Mammary epithelial cell (primary cell): ENCODE measurements at regions of chr7 and their contacts with region 1.

Region 1: GRCh38 chr7:151795168-151795811 is 81.6 kb downstream of the PRKAG2 start:
- DNase-seq: no peak
- H3K4me3 ChIP-seq: no peak overlapping the region
- H3K27ac ChIP-seq: no peak overlapping the region
- H3K4me1 ChIP-seq: peaks cover 14% of the 10 kb centered on the region
- H3K27me3 ChIP-seq: no peaks in the 10 kb centered on the region
- CTCF ChIP-seq: no peak

Region 2: GRCh38 chr7:151736403-151736909 is 58.8 kb before region 1 on chr7:
- CTCF ChIA-PET with region 1: no interaction called
- dilution Hi-C with region 1: no loop called
- in situ Hi-C with region 1: no loop called
- intact Hi-C with region 1: no loop called
- DNase-seq: peak; percentile 78
- H3K4me3 ChIP-seq: peak overlapping the region in 2 of 3 experiments; percentile 1 to 4
- H3K27ac ChIP-seq: no peak overlapping the region
- H3K4me1 ChIP-seq: peaks cover 16% of the 10 kb centered on the region
- H3K27me3 ChIP-seq: no peaks in the 10 kb centered on the region
- CTCF ChIP-seq: peak in 1 of 2 donors; percentile 21

Region 3: GRCh38 chr7:151773756-151774155 is 21.5 kb before region 1 on chr7:
- CTCF ChIA-PET with region 1: no interaction called
- dilution Hi-C with region 1: no loop called
- in situ Hi-C with region 1: no loop called
- intact Hi-C with region 1: no loop called
- DNase-seq: no peak
- H3K4me3 ChIP-seq: no peak overlapping the region
- H3K27ac ChIP-seq: no peak overlapping the region
- H3K4me1 ChIP-seq: no peaks in the 10 kb centered on the region
- H3K27me3 ChIP-seq: no peaks in the 10 kb centered on the region
- CTCF ChIP-seq: no peak

Region 4: GRCh38 chr7:151844071-151844824 is 49.0 kb after region 1 on chr7:
- CTCF ChIA-PET with region 1: no interaction called
- dilution Hi-C with region 1: loop called (anchors 10 kb)
- in situ Hi-C with region 1: no loop called
- intact Hi-C with region 1: no loop called
- DNase-seq: no peak
- H3K4me3 ChIP-seq: no peak overlapping the region
- H3K27ac ChIP-seq: no peak overlapping the region
- H3K4me1 ChIP-seq: no peaks in the 10 kb centered on the region
- H3K27me3 ChIP-seq: no peaks in the 10 kb centered on the region
- CTCF ChIP-seq: no peak